ENCODE measurements at regions of chr22 and their contacts with region 1.

Region 1: DNA sequence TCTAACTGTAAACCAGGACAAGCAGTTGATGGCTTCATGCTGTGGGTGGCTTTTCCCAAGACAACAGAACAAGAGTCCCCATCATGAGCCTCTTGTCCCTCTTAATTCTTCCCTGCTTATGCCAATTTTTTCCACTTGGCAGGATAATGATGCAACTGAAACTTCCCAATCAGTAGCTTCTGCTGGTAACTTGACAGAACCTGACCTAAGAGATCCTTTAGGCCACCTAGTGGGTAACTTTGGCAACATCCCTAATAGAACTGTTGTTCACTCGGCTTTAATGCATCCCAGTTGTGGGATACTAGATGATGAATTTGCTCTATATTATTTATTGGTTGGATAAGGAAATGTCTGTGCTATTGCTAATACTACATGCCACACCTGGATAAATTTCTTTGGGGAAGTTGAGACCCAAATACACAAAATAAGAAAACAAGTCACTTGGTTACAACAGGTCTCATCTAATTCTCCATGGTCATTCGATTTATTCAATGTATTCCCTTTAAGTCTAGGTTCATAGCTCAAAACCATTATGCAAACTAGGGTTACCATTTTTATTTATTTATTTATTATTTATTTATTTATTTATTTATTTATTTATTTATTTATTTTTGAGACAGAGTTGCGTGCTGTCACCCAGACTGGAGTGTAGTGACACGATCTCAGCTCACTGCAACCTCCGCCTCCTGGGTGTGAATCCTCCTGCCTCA is 41.4 kb upstream of the NFAM1 start:
- DNase-seq: peak; percentile 43 to 62
- ATAC-seq: peak; percentile 83 to 93
- H3K4me3 ChIP-seq: no peak overlapping the region
- H3K27ac ChIP-seq: no peak overlapping the region
- H3K4me1 ChIP-seq: 0 out of 3 replicates have a peak, but pooled peaks cover 5% of the 10 kb centered on the region
- CTCF ChIP-seq: peak; percentile 48
- EP300 ChIP-seq: no peak
- POLR2A ChIP-seq: no peak
- RAD21 ChIP-seq: peak in 1 of 2 experiments; percentile 47; a peak in 2 of 5 replicates

Region 2: DNA sequence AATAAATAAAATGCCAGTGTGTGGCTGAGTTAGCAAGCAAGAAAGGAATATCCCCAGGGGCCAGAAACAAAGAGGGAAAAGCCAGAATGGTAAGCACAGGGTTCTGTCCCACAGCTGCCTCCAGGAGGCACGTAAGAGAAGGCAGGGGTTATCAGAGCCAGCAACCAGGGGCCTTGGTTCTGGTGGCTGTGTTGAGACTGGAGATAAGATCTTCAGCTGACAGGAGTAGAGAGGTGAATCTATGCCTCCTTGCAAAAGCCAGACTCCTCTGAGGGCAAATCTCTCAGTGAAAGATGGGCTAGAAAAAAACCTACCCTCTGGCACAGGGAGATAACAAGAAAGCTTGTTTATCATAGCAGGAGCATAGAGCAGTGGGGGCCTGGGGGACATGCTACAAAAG is 11.6 kb before region 1 on chr22:
- CTCF ChIA-PET with region 1: interaction called, 17 read pairs
- POLR2A ChIA-PET with region 1: no interaction called
- DNase-seq: no peak
- ATAC-seq: no peak
- H3K4me3 ChIP-seq: no peak overlapping the region
- H3K27ac ChIP-seq: no peak overlapping the region
- H3K4me1 ChIP-seq: no peaks in the 10 kb centered on the region
- CTCF ChIP-seq: no peak
- EP300 ChIP-seq: no peak
- POLR2A ChIP-seq: no peak
- RAD21 ChIP-seq: no peak

Measured in A549 (cell line).